ENCODE measurements at regions of chr16 and their contacts with region 1.

Region 1: GRCh38 chr16:17177242-17177958 is 293.4 kb downstream of the XYLT1 start:
- DNase-seq: no peak
- ATAC-seq: no peak
- H3K4me3 ChIP-seq: no peak overlapping the region
- H3K27ac ChIP-seq: no peak overlapping the region
- H3K4me1 ChIP-seq: no peaks in the 10 kb centered on the region
- H3K27me3 ChIP-seq: peaks cover 13% of the 10 kb centered on the region; the same call in 1 of the 2 replicates
- CTCF ChIP-seq: no peak

Region 2: GRCh38 chr16:17362183-17362582 is 184.8 kb after region 1 on chr16:
- CTCF ChIA-PET with region 1: interaction called, 11 read pairs
- POLR2A ChIA-PET with region 1: no interaction called
- in situ Hi-C with region 1: no loop called
- intact Hi-C with region 1: no loop called
- DNase-seq: no peak
- ATAC-seq: no peak
- H3K4me3 ChIP-seq: no peak overlapping the region
- H3K27ac ChIP-seq: no peak overlapping the region
- H3K4me1 ChIP-seq: no peaks in the 10 kb centered on the region
- H3K27me3 ChIP-seq: peaks cover 3% of the 10 kb centered on the region
- CTCF ChIP-seq: no peak